ENCODE measurements at regions of chr1 and their contacts with region 1.

Region 1: GRCh38 chr1:155044812-155045690 is 6.1 kb upstream of the ADAM15 start:
- DNase-seq: peak; percentile 81
- ATAC-seq: peak; percentile 96
- H3K4me3 Mint-ChIP-seq: no peak overlapping the region
- H3K27ac Mint-ChIP-seq: peak overlapping the region; percentile 47
- H3K4me1 Mint-ChIP-seq: peaks cover 18% of the 10 kb centered on the region
- H3K27me3 Mint-ChIP-seq: peaks cover 6% of the 10 kb centered on the region

Region 2: GRCh38 chr1:154819628-154820590 is 225.1 kb before region 1 on chr1:
- CTCF ChIA-PET with region 1: no interaction called
- POLR2A ChIA-PET with region 1: no interaction called
- DNase-seq: peak; percentile 38
- ATAC-seq: peak; percentile 75
- H3K4me3 Mint-ChIP-seq: no peak overlapping the region
- H3K27ac Mint-ChIP-seq: peak overlapping the region; percentile 75
- H3K4me1 Mint-ChIP-seq: peaks cover 16% of the 10 kb centered on the region
- H3K27me3 Mint-ChIP-seq: peaks cover 2% of the 10 kb centered on the region

Region 3: DNA sequence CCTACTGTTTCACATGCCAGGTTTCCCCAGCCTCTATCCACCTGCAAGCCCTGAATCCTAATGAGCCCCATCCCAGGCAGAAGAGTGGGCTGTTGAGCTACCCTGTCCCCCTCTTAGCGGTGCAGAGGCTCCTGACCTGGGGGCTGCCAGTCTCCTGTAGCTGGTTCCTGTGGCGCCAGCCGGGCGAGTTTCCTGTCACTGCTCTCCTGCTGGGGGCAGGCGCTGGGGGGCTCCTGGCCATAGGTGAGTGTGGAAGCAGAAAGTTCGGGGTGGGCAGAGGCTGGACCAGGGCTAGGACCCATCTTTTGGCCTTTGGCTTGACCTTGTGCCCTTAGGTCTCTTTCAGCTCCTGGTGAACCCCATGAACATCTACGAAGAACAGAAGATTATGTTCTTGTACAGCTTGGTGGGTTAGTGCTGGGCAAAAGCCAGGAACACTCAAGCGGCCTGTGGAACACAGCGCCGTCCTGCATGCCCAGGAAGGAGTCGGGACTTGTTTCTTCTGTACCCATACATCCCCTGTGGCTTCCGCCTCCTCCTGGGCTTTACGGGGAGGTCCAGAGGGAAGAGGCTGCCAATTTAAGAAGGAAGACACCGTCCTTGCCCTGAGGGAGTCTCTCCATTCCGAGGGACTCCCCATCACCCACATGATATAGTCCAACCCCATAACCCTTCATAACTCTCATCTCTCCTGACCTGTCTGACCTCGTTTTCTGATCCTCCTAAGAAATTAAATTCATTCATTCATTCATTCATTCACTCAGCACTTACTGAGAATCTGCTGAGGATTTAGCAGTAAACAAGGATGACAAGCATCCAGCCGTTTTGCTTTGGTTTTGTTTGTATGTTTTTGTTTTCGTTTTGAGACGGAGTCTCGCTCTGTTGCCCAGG is 10.5 kb before region 1 on chr1:
- CTCF ChIA-PET with region 1: interaction called, 13 read pairs
- POLR2A ChIA-PET with region 1: no interaction called
- DNase-seq: no peak
- ATAC-seq: no peak
- H3K4me3 Mint-ChIP-seq: no peak overlapping the region
- H3K27ac Mint-ChIP-seq: no peak overlapping the region
- H3K4me1 Mint-ChIP-seq: peaks cover 10% of the 10 kb centered on the region
- H3K27me3 Mint-ChIP-seq: peaks cover 24% of the 10 kb centered on the region

Region 4: GRCh38 chr1:155078469-155079209 is 33.6 kb after region 1 on chr1 and contains the start of gene EFNA3:
- CTCF ChIA-PET with region 1: interaction called, 18 read pairs
- POLR2A ChIA-PET with region 1: no interaction called
- DNase-seq: peak; percentile 60
- ATAC-seq: peak; percentile 21
- H3K4me3 Mint-ChIP-seq: peak within 1 kb of the TSS; percentile 59
- H3K27ac Mint-ChIP-seq: peak within 1 kb of the TSS; percentile 56
- H3K4me1 Mint-ChIP-seq: peaks cover 69% of the 10 kb centered on the region
- H3K27me3 Mint-ChIP-seq: peaks cover 39% of the 10 kb centered on the region
- total RNA-seq, gene EFNA3: 3.8 to 5.5 TPM

Region 5: GRCh38 chr1:155117617-155118016 is 72.6 kb after region 1 on chr1:
- CTCF ChIA-PET with region 1: no interaction called
- POLR2A ChIA-PET with region 1: no interaction called
- DNase-seq: no peak
- ATAC-seq: no peak
- H3K4me3 Mint-ChIP-seq: no peak overlapping the region
- H3K27ac Mint-ChIP-seq: no peak overlapping the region
- H3K4me1 Mint-ChIP-seq: no peaks in the 10 kb centered on the region
- H3K27me3 Mint-ChIP-seq: peaks cover 24% of the 10 kb centered on the region

Measured in activated CD8-positive, alpha-beta T cell treated with anti-CD3 and anti-CD28 coated beads, Interleukin-2, amount 10 ng/mL, durations not matched to agents 7 days and 5 days (primary cell).